GM10248 (cell line): ENCODE measurements at regions of chr1 and their contacts with region 1.

Region 1: DNA sequence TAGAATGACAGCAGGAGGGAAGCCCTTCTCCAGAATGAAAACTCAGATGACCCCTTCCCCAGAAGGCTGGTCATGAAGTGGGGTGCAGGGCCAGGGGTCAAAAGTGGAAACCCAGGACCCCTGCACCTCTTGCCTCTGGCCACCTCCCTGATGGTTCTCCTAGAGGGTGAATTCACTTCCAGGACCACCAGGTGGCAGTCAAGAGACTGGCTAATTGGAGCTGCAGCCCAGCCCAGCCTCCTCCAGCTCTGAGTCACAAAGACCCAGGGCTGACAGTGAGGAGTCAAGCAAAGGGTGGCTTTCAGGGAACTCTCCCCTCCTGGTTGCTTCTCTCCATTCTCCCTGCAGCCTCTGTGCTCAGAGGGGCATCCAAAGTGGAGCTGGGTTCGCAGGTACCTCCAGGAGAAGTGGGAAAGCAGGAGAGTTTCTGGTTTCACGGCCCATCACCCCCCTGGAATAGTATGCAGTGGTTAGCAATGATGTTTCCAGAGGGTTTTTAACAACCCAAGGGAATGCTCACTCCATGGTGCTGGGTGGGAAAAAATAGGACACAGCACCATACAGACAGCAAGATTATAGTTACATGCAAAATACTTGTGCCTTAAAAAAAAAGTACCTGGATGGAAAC is 6.1 kb upstream of the EPHB2 start:
- DNase-seq: peak; percentile 81
- CTCF ChIP-seq: peak; percentile 75

Region 2: DNA sequence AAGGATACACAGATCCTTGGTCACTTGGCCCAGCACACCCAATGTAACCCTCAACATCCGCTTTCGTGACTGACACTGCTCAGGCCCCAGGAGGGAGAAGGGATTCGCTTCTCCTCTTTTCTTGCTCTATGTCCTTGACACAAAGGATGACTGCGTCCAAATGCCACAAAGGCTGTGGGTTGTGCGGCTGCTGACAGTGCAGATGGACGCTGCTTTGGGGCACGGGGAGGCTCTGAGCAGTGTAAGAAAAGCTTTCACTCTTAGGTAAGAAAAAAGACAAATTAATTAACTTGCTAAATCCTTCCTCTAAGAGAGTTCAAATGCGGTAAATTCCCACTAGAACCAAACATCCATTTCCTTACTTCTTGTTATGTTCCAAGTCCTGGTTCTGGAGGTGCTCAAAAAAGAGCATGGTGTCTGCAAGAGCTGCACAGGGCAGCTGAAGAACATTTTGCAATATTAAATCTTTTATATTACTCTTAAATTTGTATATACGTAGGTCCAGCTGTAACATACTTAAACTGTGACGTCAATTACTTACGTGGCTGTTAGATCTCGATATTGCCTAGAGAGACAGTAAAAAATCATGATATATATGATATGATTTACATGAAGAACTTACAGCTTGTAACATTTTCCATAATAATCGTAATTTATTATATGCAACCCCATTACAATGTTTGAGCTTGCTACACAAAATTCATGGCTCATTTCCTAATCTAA is 13.4 kb before region 1 on chr1:
- CTCF ChIA-PET with region 1: interaction called, 11 read pairs
- POLR2A ChIA-PET with region 1: no interaction called
- DNase-seq: no peak
- CTCF ChIP-seq: no peak

Region 3: GRCh38 chr1:22722901-22723550 is 18.5 kb after region 1 on chr1:
- CTCF ChIA-PET with region 1: interaction called, 28 read pairs
- POLR2A ChIA-PET with region 1: no interaction called
- DNase-seq: no peak
- CTCF ChIP-seq: no peak

Region 4: DNA sequence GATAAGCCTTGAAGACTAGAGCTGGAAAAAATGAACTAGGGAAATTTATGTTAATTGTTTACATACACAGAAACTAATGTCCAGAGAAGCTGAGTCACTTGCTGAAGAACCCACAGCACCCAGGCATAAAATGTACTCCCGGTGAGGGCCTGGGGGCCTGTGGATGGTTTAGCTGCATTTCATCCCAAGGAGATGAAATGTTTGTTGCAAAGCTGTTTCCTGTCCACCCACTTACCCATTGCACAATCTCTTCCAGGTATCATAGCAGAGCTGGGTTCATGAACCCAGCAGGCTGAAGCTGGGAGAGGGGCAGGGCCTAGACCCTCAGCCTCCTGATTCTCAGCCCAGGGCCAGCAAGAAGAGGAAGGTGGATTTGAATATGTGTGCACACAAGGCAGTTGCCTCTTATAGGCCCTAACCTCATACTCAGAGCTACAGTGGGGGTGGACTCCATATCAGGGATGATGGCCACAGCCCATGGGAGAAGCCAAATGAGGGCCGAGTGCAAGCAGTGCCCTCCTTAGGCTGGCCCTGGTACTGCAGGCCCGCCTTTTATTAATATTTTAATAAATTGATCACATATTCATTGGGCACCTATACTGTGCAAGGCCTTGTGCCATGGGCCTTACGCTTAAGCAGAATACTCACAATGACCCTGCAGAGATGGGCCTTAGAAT is 157.3 kb after region 1 on chr1:
- CTCF ChIA-PET with region 1: interaction called, 28 read pairs
- POLR2A ChIA-PET with region 1: no interaction called
- DNase-seq: peak; percentile 39
- CTCF ChIP-seq: peak; percentile 24

Region 5: DNA sequence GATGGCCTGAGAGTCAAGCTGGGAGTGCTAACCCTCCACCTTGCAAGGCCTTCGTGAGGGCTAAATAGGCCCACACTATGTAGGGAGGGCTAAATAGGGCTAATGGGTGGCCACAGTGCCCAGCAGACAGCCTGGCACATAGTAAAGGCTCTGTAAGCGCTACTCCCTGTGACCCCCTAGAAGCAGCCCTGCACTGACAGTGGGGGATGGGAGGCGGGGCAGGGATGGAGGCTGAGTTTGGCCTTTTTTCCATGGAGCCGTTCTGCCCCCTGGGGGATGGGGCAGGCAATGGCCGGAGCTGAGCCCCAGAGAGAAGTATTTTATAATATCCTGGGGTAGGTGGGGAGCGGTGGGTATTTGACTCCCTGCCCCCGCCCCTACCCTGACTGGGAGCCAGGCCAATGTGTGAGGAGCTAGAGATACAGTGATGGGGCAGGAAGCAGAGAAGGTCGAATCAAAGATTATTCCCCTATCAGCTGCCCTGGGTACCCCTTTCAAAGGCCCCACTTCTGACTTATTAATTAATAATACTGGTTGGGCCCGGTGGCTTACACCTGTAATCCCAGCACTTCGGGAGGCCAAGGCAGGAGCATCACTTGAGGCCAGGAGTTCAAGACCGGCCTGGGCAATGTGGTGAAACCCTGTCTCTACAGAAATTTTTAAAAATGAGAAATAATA is 225.8 kb after region 1 on chr1:
- CTCF ChIA-PET with region 1: interaction called, 21 read pairs
- POLR2A ChIA-PET with region 1: no interaction called
- DNase-seq: peak; percentile 63
- CTCF ChIP-seq: peak; percentile 63